PC-3 (cell line): ENCODE measurements at regions of chr12 and their contacts with region 1.

Region 1: GRCh38 chr12:52082988-52083637 is 3.6 kb downstream of the SMIM41 start:
- DNase-seq: peak; percentile 65
- ATAC-seq: peak; percentile 62
- H3K4me3 ChIP-seq: no peak overlapping the region
- H3K27ac ChIP-seq: no peak overlapping the region
- H3K4me1 ChIP-seq: no peaks in the 10 kb centered on the region
- H3K27me3 ChIP-seq: no peaks in the 10 kb centered on the region
- CTCF ChIP-seq: peak; percentile 98

Region 2: GRCh38 chr12:52121824-52122539 is 38.9 kb after region 1 on chr12:
- CTCF ChIA-PET with region 1: no interaction called
- POLR2A ChIA-PET with region 1: no interaction called
- intact Hi-C with region 1: loop called (anchors 5 kb)
- DNase-seq: peak; percentile 70
- ATAC-seq: peak; percentile 42
- H3K4me3 ChIP-seq: no peak overlapping the region
- H3K27ac ChIP-seq: no peak overlapping the region
- H3K4me1 ChIP-seq: peaks cover 24% of the 10 kb centered on the region
- H3K27me3 ChIP-seq: no peaks in the 10 kb centered on the region
- CTCF ChIP-seq: peak; percentile 81